Transverse colon (tissue), 4 donors: ENCODE measurements at regions of chr3 and their contacts with region 1.

Region 1: DNA sequence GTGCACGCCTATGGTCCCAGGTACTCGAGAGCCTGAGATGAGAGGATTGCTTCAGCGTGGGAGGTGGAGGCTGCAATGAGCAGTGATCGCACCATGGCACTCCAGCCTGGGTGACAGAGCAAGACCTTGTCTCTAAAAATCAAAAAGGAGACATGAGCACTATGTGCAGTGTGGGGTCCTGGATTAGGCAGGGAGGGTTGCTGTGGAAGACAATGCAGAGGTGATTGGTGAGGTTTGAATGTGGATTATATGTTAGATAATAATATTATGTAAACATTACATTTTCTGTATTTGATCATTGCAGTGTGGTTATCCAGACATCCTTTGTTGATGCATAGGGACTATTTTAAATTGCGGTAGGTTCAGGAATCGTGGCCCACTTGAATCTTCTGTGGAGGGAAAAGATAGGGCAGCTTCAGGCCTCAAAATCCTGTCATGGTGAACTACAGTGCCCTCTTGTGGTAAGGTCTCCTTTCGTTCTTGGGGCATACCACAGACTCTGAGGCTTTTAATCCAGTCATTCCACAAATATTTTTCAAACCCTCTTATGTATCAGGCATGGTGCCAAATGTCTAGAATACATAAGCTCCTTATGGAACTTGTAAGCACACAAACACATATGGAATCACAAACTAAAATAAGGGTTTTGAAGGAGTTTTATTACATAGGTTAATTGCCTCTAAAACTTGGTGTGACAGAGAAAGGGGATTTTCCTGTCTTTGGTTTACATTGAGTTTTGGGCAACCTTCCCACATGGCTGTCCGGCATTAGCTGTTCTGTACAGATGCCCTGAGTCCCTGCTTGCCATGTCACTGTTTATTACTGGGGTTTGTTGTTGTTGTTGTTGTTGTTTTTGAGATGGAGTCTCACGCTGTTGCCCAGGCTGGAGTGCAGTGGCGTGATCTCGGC is 37.7 kb downstream of the GPD1L start:
- DNase-seq: peak; percentile 42
- H3K4me3 ChIP-seq: no peak overlapping the region
- H3K27ac ChIP-seq: no peak overlapping the region
- H3K4me1 ChIP-seq: peaks cover 0 to 9% (median 0%) of the 10 kb centered on the region in 4 donors
- H3K27me3 ChIP-seq: no peaks in the 10 kb centered on the region
- CTCF ChIP-seq: peak; percentile 69 to 88 (median 79)
- EP300 ChIP-seq: no peak
- POLR2A ChIP-seq: no peak

Region 2: DNA sequence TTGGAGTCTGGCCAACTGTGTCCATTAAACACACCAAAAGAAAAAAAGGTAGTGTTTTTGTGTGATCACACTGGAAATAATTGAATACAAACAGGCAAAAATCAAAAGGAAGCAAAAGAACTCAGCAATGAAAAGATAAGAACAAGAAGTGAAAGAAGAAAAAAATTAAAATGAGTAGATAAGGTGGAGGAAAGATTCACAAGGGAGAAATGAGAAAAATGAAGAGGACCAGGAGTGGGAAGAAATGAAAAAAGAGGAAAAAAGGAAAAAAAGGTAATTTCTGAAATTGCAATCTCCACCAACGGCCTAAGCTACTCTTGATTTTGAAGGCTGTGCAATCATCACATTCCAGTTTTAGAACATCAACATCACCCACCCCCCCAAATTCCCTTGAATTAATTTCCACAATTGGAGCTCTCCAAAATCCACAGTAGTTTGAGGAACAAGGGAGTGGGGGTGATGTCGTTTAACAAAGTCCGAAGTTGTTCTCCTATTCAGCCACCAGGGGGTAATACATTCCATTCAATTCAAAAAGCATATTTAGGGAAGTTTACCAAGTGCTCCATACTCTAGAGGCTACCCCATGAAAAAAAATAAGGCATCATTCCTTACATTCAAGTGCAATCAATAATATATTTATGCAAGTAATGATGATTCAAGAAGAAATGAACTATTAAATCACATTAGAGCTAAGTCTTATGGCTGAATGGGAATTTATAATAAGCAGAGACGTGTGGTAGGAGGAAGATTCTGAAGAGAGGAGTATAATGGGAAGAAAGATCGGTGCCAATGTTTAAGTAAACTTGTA is 125.1 kb before region 1 on chr3:
- in situ Hi-C with region 1: loop called in 3 of 4 experiments (anchors 5 kb)
- intact Hi-C with region 1: loop called (anchors 5 kb)
- DNase-seq: no peak
- H3K4me3 ChIP-seq: no peak overlapping the region
- H3K27ac ChIP-seq: peak overlapping the region in 2 of 4 donors; percentile 9 to 29
- H3K4me1 ChIP-seq: peaks cover 0 to 19% (median 10%) of the 10 kb centered on the region in 4 donors
- H3K27me3 ChIP-seq: no peaks in the 10 kb centered on the region
- CTCF ChIP-seq: peak; percentile 72 to 89 (median 78)
- EP300 ChIP-seq: no peak
- POLR2A ChIP-seq: no peak

Region 3: DNA sequence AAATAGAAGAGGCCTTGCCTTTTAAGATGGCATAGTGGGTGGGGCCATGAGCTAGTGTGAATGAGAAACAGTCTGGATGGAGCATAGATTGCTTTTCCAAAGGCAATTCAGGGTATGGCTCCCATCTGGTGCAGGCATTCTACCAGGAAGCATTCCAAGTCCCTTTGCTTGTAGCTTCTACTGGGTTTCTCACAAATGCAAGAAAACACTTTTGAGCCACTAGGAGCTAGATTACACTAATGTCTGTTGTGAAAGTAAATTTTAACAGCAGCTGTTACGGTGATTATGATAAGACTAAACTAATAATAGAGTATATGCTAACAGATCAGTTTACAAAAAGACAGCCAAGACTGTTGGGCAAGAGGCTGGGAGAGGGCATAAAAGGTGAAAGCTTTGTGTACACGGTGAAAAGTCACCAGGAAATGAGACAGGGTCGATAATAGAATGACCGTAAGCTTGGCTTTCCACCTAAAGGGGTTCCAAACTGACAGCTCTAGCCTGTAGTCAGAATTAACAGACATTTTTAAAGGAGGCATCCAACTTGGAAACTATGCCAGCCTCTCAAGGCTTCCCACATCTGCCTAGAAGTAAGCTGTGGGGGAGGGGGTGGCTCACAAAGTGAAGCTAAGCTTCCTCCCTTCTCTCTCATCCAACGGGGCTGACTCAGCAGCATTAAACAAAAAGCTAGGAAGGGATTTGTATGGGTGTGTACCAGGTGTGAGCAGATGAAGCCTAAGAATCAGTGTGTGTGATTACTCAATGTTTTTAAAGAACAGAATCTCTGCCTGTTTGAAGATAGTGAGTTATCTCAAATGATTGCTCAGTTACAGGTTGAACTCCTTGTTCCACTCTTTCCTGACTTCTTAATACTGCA is 98.8 kb before region 1 on chr3:
- in situ Hi-C with region 1: loop called in 1 of 4 experiments (anchors 25 kb)
- intact Hi-C with region 1: no loop called
- DNase-seq: peak; percentile 46
- H3K4me3 ChIP-seq: peak overlapping the region in 1 of 4 donors; percentile 30
- H3K27ac ChIP-seq: peak overlapping the region; percentile 60 to 83 (median 75)
- H3K4me1 ChIP-seq: peaks cover 6 to 19% (median 13%) of the 10 kb centered on the region in 4 donors
- H3K27me3 ChIP-seq: no peaks in the 10 kb centered on the region
- CTCF ChIP-seq: no peak
- EP300 ChIP-seq: no peak
- POLR2A ChIP-seq: no peak